GM13976 (cell line): ENCODE measurements at regions of chr9 and their contacts with region 1.

Region 1: GRCh38 chr9:96854073-96854876 is at the start of gene ZNF782:
- DNase-seq: peak; percentile 89
- CTCF ChIP-seq: no peak

Region 2: GRCh38 chr9:97109194-97109811 is 255.0 kb after region 1 on chr9:
- in situ Hi-C with region 1: loop called (anchors 25 kb)
- DNase-seq: peak; percentile 34
- CTCF ChIP-seq: peak; percentile 61

Region 3: GRCh38 chr9:97398999-97399758 is 544.9 kb after region 1 on chr9:
- in situ Hi-C with region 1: loop called (anchors 10 kb)
- DNase-seq: peak; percentile 84
- CTCF ChIP-seq: peak; percentile 99

Region 4: GRCh38 chr9:97615439-97616072 is 761.3 kb after region 1 on chr9:
- in situ Hi-C with region 1: loop called (anchors 25 kb)
- DNase-seq: peak; percentile 64
- CTCF ChIP-seq: peak; percentile 83